Ascending aorta (tissue), 2 donors: ENCODE measurements at regions of chrX and their contacts with region 1.

Region 1: GRCh38 chrX:54808605-54809483 is 1.3 kb downstream of the MAGED2 start:
- DNase-seq: peak; percentile 84 to 95
- H3K4me3 ChIP-seq: peak overlapping the region; percentile 56 to 66
- H3K27ac ChIP-seq: peak overlapping the region; percentile 82 to 88
- H3K4me1 ChIP-seq: peaks cover 0 to 9% of the 10 kb centered on the region in 2 donors
- H3K27me3 ChIP-seq: no peaks in the 10 kb centered on the region
- CTCF ChIP-seq: no peak

Region 2: DNA sequence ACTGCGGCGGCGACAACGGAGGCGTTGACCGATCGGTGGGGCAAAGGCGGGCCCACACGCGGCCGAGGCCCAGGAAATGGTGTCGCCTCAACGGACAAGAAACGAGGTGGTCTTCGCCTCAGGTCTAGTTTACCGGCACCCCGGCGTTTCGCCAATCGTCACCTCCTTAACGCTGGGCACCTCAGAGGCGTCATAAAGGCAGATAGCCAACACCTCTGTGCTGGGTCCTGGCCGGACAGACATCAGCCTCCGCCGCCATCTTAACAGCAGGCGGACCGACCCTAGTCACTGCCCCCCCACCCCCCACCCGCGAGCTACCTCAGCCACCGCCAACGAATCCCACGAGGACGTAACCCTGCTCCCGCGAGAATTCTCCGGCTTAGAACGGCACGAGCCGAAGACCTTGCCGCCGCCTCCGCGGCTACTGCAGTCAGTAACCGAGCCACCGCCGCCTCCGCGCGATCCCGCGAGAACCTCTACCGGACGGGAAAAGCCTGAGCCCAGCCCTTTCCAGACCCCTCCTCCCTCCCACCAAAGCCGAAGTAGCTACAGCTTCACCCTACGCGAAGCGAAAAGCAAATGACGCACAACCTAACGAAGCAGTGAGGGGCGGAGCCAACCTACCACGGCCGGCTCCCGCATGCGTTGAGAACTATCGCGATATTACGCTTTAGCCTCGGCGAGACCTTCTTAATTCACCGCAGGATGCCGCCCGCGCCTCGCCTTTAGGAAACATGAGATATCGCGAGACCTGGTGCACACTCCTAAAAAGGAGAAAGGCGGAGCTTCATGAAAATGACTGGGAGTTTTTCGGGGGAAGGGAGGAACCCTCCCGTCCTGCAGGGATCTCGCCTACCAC is 1125.1 kb before region 1 on chrX:
- intact Hi-C with region 1: loop called (anchors 10 kb)
- DNase-seq: peak; percentile 84 to 96
- H3K4me3 ChIP-seq: peak overlapping the region; percentile 56 to 71
- H3K27ac ChIP-seq: peak overlapping the region; percentile 86 to 89
- H3K4me1 ChIP-seq: no peaks in the 10 kb centered on the region
- H3K27me3 ChIP-seq: no peaks in the 10 kb centered on the region
- CTCF ChIP-seq: no peak

Region 3: DNA sequence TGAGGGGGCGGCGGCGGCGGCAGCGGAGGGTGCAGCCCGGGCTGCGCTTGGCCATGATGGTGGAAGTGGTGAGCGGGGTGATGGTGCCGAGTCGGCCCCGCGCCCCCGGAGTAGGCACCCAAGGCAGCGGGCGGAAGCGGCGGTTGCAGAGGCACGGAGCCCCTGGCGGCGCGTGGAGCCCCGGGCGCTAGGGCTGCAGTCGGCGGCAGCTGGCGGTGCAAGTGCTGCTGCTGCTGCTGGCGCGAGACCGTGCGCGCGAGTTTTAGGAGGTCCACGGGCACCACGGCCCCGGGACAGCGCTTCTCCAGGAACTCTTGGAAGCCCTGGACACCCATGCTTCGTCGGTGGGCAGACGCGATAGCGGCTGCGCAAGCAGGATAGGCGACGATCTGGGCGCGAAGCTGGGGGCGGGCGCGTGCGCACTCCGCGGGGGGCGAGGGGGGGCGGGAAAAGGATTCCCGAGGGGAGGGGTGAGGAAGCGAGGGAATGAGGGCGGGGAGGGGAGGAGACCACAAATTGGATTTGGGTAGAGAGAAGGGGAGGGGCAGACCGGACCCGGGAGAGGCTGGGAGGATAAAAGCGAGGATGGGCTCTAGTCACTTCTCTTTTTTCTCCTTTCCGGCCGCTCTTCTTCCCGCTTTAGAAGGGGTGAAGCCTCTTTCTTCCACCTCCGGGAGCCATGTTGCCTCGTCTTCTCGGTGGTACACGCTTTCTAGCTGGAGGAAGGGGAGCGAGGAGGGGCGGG is 625.8 kb before region 1 on chrX and contains the start of gene FAM120C:
- intact Hi-C with region 1: loop called (anchors 2 kb)
- DNase-seq: peak in 1 of 2 donors; percentile 73
- H3K4me3 ChIP-seq: peak within 1 kb of the TSS; percentile 69 to 78
- H3K27ac ChIP-seq: peak within 1 kb of the TSS; percentile 86 to 91
- H3K4me1 ChIP-seq: peaks cover 0 to 3% of the 10 kb centered on the region in 2 donors
- H3K27me3 ChIP-seq: no peaks in the 10 kb centered on the region
- CTCF ChIP-seq: no peak
- total RNA-seq, gene FAM120C: 1.6 TPM

Region 4: GRCh38 chrX:54529552-54530357 is 279.1 kb before region 1 on chrX and contains the start of gene GNL3L:
- intact Hi-C with region 1: loop called (anchors 2 kb)
- DNase-seq: peak; percentile 60 to 92
- H3K4me3 ChIP-seq: peak within 1 kb of the TSS; percentile 69 to 79
- H3K27ac ChIP-seq: peak within 1 kb of the TSS; percentile 65 to 73
- H3K4me1 ChIP-seq: no peaks in the 10 kb centered on the region
- H3K27me3 ChIP-seq: no peaks in the 10 kb centered on the region
- CTCF ChIP-seq: no peak
- total RNA-seq, gene GNL3L: 15.4 TPM

Region 5: DNA sequence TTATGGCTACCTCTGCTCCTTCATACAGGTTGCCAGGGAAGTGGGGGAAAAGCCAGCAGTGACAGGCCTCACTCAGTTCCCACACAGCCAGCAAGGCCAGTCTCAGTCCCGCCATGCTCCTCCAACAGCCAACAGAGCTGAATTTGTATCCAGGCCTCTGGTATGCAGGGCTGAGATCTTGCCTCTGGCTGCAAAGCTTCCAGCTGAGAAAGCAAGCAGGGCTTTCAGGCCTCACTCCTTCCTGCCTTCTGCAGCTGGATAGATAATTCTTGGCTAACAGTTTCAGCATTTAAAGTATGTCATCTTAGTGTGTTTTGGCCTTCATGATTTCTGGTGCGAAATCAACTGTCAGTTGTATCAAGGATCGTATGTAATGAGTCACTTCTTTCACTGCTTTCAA is 175.2 kb before region 1 on chrX:
- intact Hi-C with region 1: no loop called
- DNase-seq: no peak
- H3K4me3 ChIP-seq: no peak overlapping the region
- H3K27ac ChIP-seq: no peak overlapping the region
- H3K4me1 ChIP-seq: no peaks in the 10 kb centered on the region
- H3K27me3 ChIP-seq: no peaks in the 10 kb centered on the region
- CTCF ChIP-seq: no peak

Region 6: GRCh38 chrX:54786962-54787361 is 21.9 kb before region 1 on chrX:
- intact Hi-C with region 1: no loop called
- DNase-seq: no peak
- H3K4me3 ChIP-seq: no peak overlapping the region
- H3K27ac ChIP-seq: no peak overlapping the region
- H3K4me1 ChIP-seq: no peaks in the 10 kb centered on the region
- H3K27me3 ChIP-seq: no peaks in the 10 kb centered on the region
- CTCF ChIP-seq: no peak

Region 7: DNA sequence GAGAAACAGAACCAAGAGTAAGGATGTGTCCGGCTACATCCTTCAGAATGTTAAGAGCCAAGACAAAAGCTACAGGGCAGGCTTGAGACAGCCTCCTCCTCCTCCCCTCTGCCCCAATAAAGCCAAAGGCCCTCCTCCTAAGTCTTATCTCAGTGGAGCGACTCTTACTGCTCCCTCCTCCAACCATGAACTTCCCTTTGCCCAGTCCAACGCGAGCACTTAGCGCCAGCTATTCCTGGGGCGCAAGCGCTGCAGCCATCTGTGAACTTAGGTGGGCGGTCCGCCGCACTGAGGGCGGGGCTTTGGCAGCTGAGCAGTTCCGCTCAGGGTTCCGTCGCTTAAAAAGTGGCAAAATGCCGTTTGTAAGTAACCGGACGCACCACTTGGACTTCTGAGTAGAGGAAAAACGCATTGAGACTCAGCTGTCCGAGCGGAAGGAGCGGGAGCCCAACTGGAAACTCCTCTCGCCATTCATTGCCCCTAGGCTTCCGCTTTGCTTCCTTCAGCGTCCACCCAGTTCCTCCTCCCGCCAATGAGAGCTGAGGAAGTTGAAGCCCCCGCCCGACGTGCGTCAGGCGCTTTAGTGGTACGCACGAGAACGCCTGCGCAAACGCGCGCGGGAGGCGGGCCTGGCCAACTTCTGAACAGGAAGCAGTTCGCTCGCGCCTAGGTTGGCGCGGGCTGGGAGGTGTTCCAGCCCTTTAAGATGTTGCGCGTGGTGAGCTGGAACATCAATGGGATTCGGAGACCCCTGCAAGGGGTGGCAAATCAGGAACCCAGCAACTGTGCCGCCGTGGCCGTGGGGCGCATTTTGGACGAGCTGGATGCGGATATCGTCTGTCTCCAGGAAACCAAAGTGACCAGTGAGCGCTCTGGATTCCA is 191.1 kb after region 1 on chrX and contains the start of gene APEX2:
- intact Hi-C with region 1: loop called (anchors 2 kb)
- DNase-seq: peak; percentile 82 to 95
- H3K4me3 ChIP-seq: peak within 1 kb of the TSS; percentile 64 to 68
- H3K27ac ChIP-seq: peak within 1 kb of the TSS; percentile 86 to 87
- H3K4me1 ChIP-seq: peaks cover 0 to 3% of the 10 kb centered on the region in 2 donors
- H3K27me3 ChIP-seq: no peaks in the 10 kb centered on the region
- CTCF ChIP-seq: no peak
- total RNA-seq, gene APEX2: 31.5 TPM